Pancreas (tissue), 10 donors: ENCODE measurements at regions of chrX and their contacts with region 1.

Region 1: DNA sequence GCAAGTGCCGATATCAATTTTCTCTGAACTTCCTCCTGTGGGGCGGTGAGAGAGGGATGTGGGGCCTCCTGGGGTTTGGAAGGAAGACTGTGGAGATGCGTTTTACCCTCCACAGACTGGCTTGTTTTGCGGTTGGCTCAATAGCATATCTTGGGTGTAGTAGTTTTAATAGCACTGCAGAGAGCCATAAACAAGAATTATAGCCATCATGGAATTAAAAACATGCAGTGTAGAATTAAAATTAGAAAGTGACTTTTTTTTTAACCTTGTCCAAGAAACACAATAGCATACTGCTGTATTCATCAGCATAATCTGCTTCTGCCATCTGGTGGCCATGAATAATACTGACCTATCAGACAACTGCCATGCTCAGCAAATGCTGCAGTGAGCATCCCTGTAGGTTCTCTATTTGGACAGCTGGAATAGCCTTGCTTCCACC is 47.3 kb upstream of the SCML1 start:
- DNase-seq: peak in 3 of 6 donors; percentile 15 to 61 (median 34)
- ATAC-seq: peak; percentile 74 to 95 (median 93)
- H3K4me3 ChIP-seq: no peak overlapping the region
- H3K27ac ChIP-seq: no peak overlapping the region
- H3K4me1 ChIP-seq: no peaks in the 10 kb centered on the region
- H3K27me3 ChIP-seq: peaks cover 0 to 10% (median 2%) of the 10 kb centered on the region in 4 donors
- CTCF ChIP-seq: peak; percentile 47 to 64 (median 59)

Region 2: GRCh38 chrX:17242470-17242869 is 447.5 kb before region 1 on chrX:
- intact Hi-C with region 1: loop called in 1 of 3 experiments (anchors 10 kb)
- DNase-seq: peak in 3 of 6 donors; percentile 2 to 46 (median 14)
- ATAC-seq: peak; percentile 53 to 80 (median 74)
- H3K4me3 ChIP-seq: no peak overlapping the region
- H3K27ac ChIP-seq: no peak overlapping the region
- H3K4me1 ChIP-seq: no peaks in the 10 kb centered on the region
- H3K27me3 ChIP-seq: no peaks in the 10 kb centered on the region
- CTCF ChIP-seq: peak; percentile 65 to 82 (median 79)

Region 3: DNA sequence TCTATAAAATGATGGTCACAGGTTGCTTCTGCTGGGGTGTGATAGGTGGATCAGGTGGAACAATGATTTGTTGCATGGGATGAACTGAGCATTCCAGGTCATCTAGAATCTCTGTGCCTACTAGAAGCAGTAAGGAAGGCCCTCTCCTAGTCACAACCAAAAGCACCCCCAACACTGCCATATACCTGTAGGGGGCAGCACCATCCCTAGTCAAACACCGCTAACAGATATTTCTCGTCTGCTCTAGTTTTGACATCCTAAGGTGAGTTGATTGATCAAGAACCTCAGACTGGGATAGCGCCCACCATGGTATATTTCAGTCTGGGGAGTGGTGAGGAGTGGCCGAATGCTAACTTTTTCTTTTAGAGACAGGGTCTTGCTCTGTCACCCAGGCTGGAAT is 154.8 kb before region 1 on chrX:
- intact Hi-C with region 1: loop called in 1 of 3 experiments (anchors 10 kb)
- DNase-seq: peak in 4 of 6 donors; percentile 23 to 63 (median 54)
- ATAC-seq: peak in 3 of 4 donors; percentile 66 to 89 (median 78)
- H3K4me3 ChIP-seq: no peak overlapping the region
- H3K27ac ChIP-seq: no peak overlapping the region
- H3K4me1 ChIP-seq: no peaks in the 10 kb centered on the region
- H3K27me3 ChIP-seq: no peaks in the 10 kb centered on the region
- CTCF ChIP-seq: peak; percentile 21 to 36 (median 28)

Region 4: GRCh38 chrX:17944833-17945497 is 255.0 kb after region 1 on chrX:
- intact Hi-C with region 1: no loop called
- DNase-seq: no peak
- ATAC-seq: peak in 2 of 4 donors; percentile 44 to 47
- H3K4me3 ChIP-seq: no peak overlapping the region
- H3K27ac ChIP-seq: no peak overlapping the region
- H3K4me1 ChIP-seq: no peaks in the 10 kb centered on the region
- H3K27me3 ChIP-seq: peaks cover 0 to 7% (median 2%) of the 10 kb centered on the region in 4 donors
- CTCF ChIP-seq: peak in 2 of 4 donors; percentile 11 to 35

Region 5: DNA sequence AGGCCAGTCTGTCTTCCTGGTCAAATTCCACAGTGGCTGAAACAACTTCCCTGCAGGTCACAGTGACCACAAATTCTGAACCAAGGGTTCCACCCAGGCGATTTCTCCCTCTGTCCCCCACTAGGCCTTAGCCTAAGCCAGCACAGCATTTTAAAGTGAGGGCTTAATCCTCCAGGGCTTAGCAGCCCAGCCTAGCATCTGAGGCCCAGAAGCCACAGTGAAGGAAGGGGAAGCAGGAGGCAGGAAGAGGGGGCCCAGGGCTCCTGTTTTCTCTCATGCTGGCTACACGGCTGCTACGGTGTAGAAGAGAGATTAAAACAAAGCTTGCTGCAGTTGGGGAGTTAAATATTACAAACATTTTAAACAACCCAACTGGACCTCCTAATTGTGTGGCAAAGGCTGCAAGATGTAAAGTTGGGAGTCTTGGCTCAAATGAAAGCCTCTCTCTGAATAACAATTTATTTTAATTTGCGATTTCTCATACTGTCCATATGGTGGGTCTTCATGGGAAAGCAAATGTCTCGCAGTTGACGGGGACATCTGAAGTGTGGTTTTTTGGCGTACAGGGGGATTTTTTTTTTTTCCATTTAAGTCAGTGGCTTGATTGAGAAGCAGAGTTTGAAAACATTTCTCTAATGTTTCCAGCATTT is 341.9 kb after region 1 on chrX:
- intact Hi-C with region 1: no loop called
- DNase-seq: no peak
- ATAC-seq: no peak
- H3K4me3 ChIP-seq: no peak overlapping the region
- H3K27ac ChIP-seq: no peak overlapping the region
- H3K4me1 ChIP-seq: no peaks in the 10 kb centered on the region
- H3K27me3 ChIP-seq: peaks cover 0 to 15% (median 0%) of the 10 kb centered on the region in 4 donors
- CTCF ChIP-seq: no peak